ENCODE measurements at regions of chr22 and their contacts with region 1.

Region 1: GRCh38 chr22:26665813-26666231 is 8.4 kb downstream of the MIAT start:
- DNase-seq: peak; percentile 24
- ATAC-seq: peak; percentile 28
- H3K4me3 Mint-ChIP-seq: peak overlapping the region; percentile 72
- H3K27ac Mint-ChIP-seq: peak overlapping the region; percentile 96
- H3K4me1 Mint-ChIP-seq: peaks cover 55% of the 10 kb centered on the region
- H3K27me3 Mint-ChIP-seq: no peaks in the 10 kb centered on the region
- CTCF ChIP-seq: peak; percentile 30

Region 2: DNA sequence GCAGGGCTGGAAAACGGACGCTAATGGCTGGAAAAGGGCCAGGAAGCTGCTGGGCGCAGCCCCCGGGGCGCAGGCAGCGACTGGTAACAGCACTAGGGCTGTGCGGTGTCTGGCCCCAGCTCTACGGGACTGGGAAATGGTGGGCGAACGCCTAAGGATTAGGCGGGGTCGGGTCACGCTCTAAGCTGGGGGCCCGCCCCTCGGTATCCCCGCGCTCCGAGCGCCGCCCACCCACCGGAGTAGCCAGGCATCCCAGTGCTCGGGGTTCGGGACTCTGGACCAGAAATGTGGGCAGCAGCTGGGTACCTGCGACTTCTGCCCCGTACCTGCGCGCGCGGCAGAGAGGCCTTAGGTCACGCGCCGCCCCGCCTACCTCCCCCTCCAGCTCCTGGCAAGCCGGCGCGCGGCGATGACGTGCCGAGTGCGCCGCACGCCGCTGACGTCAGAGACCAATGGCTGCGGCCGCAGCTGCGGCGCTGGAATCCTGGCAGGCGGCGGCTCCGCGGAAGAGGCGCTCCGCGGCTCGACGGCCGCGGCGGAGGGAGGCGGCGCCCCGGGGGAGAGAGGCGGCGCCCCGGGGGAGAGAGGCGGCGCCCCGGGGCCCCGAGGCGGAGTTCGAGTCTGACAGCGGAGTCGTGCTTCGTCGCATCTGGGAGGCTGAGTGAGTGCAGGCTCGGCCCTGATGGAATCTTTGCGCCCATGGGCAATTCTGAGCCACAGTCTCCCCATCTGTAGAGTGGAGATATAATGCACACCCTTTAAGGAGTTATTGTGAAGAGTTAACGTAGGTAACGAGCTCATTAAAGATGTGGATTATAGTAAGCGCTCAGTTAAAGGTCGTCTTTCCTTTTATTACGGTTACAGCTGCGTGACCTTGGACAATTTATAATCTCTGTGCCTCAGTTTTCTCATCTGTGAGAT is 182.1 kb before region 1 on chr22 and contains the starts of genes HPS4 and SRRD:
- CTCF ChIA-PET with region 1: interaction called, 12 read pairs
- POLR2A ChIA-PET with region 1: interaction called, 16 read pairs
- intact Hi-C with region 1: no loop called
- DNase-seq: peak; percentile 92
- ATAC-seq: peak; percentile 81
- H3K4me3 Mint-ChIP-seq: peak within 1 kb of the TSS; percentile 94
- H3K27ac Mint-ChIP-seq: peak within 1 kb of the TSS; percentile 98
- H3K4me1 Mint-ChIP-seq: peaks cover 61% of the 10 kb centered on the region
- H3K27me3 Mint-ChIP-seq: no peaks in the 10 kb centered on the region
- CTCF ChIP-seq: no peak
- total RNA-seq, gene HPS4: 51.8 to 53.5 TPM
- total RNA-seq, gene SRRD: 24.8 to 26.3 TPM

Region 3: GRCh38 chr22:26635117-26635516 is 30.7 kb before region 1 on chr22:
- CTCF ChIA-PET with region 1: no interaction called
- POLR2A ChIA-PET with region 1: no interaction called
- intact Hi-C with region 1: no loop called
- DNase-seq: no peak
- ATAC-seq: no peak
- H3K4me3 Mint-ChIP-seq: no peak overlapping the region
- H3K27ac Mint-ChIP-seq: no peak overlapping the region
- H3K4me1 Mint-ChIP-seq: peaks cover 8% of the 10 kb centered on the region
- H3K27me3 Mint-ChIP-seq: no peaks in the 10 kb centered on the region
- CTCF ChIP-seq: no peak

Region 4: GRCh38 chr22:26679003-26679629 is 13.3 kb after region 1 on chr22:
- CTCF ChIA-PET with region 1: interaction called, 10 read pairs
- POLR2A ChIA-PET with region 1: interaction called, 3 read pairs
- intact Hi-C with region 1: no loop called
- DNase-seq: peak; percentile 84
- ATAC-seq: peak; percentile 93
- H3K4me3 Mint-ChIP-seq: no peak overlapping the region
- H3K27ac Mint-ChIP-seq: peak overlapping the region; percentile 74
- H3K4me1 Mint-ChIP-seq: peaks cover 54% of the 10 kb centered on the region
- H3K27me3 Mint-ChIP-seq: no peaks in the 10 kb centered on the region
- CTCF ChIP-seq: peak; percentile 95

Region 5: DNA sequence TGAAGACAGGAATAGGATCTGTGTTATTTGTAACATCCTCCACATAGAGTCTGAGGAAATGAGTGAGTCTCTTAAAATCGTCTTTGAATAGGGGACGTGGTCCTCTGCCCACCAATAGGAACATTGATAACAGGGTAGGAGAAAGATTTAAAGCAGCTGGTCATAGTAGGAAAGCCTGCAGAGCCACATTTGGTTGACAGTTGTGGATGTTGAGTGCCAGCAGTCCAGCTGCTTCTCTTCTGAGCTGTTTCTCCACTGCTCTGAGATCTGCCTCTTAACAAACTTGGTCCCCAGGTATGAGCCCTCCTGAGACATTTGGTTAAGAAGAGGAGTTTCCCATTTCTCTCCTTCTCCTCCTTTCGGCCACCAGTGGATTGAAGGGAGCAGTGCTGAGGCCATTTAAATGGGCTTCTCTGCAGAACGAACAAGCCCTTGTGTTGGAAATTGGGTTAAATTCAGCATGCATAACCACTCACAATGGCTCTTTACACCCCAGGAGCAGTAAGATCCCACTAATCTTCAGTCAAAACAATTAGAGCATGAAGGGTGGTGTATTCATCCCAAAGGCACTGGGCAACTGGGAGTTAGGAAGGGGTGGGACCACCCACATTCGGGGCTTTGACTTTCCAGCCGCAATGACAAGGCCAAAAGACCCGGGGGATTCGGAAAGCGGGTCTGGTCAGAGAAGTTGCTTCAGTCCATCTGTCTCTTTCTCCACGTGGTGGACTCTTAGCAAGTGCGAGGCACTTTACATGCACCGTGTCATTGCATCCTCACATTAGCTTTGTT is 23.9 kb after region 1 on chr22:
- CTCF ChIA-PET with region 1: no interaction called
- POLR2A ChIA-PET with region 1: no interaction called
- intact Hi-C with region 1: no loop called
- DNase-seq: no peak
- ATAC-seq: no peak
- H3K4me3 Mint-ChIP-seq: no peak overlapping the region
- H3K27ac Mint-ChIP-seq: no peak overlapping the region
- H3K4me1 Mint-ChIP-seq: peaks cover 32% of the 10 kb centered on the region
- H3K27me3 Mint-ChIP-seq: no peaks in the 10 kb centered on the region
- CTCF ChIP-seq: no peak

Measured in activated CD8-positive, alpha-beta T cell treated with anti-CD3 and anti-CD28 coated beads for 36 hours (primary cell).